ENCODE measurements at regions of chr16 and their contacts with region 1.

Region 1: DNA sequence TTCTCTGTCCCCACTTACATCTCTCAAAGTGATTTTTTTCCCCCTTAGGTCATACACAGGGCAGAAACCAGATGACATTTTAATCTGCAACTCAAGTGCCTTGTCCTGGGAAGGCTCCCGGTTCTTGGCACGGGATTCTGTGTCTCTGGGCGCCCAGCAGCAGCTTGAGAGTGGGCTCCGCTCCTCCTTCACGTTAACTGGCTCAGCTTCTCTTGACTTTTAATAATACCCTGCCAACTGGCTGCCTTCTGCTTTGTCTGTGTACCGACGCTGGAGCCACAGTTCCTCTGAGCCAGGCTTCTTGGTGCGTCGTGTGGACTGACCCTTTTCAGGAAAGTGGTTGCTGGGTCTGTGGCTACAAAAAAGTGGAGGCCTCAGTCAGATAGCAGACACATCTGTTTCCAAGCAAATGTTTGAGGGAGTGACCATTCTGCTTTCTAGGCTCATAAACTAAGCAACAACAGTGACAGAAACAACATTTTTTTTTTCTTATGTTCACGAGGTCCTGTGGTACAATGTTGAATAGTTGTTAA is 64.9 kb downstream of the IRF8 start:
- DNase-seq: no peak
- H3K4me3 ChIP-seq: no peak overlapping the region
- H3K27ac ChIP-seq: no peak overlapping the region
- H3K4me1 ChIP-seq: peaks cover 15% of the 10 kb centered on the region
- H3K27me3 ChIP-seq: no peaks in the 10 kb centered on the region
- CTCF ChIP-seq: no peak
- POLR2A ChIP-seq: no peak

Region 2: GRCh38 chr16:85905110-85906095 is 58.4 kb before region 1 on chr16:
- intact Hi-C with region 1: loop called (anchors 2 kb)
- DNase-seq: no peak
- H3K4me3 ChIP-seq: no peak overlapping the region
- H3K27ac ChIP-seq: no peak overlapping the region
- H3K4me1 ChIP-seq: no peaks in the 10 kb centered on the region
- H3K27me3 ChIP-seq: no peaks in the 10 kb centered on the region
- CTCF ChIP-seq: no peak
- POLR2A ChIP-seq: no peak

Region 3: DNA sequence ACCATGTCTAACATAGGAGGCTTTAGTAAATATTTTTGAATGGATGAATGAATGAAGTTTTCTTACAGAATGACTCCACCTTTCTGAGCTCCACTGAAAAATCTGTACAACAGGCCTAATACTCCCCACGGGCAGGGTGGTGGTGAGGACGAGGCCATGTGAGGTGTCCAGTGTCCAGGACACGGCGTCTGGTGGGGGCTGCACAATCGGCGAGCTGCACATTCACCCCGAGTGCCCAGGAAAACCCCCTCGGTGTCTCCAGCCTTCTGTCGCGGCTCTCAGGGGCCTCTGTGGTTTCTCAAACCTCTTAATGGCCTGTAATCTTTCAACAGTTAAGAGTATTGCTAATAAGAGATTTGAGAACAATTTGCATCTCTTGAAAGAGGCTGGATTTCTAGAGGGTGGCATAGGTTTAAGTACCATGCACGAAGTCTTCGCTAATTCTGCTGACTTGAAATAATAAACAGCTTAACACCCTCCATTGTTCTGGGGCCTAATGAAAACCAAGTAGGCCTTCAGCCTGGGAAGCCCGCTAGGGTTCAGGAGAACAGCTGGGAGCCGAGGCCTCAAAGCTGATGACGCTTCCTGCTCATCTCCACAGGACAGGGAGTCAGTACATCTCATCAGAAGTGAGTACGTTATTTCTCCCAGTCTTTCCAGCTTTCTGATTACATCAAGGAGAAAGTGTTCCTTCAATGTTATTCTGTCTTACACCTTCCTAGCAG is 241.9 kb after region 1 on chr16:
- intact Hi-C with region 1: no loop called
- DNase-seq: no peak
- H3K4me3 ChIP-seq: no peak overlapping the region
- H3K27ac ChIP-seq: no peak overlapping the region
- H3K4me1 ChIP-seq: no peaks in the 10 kb centered on the region
- H3K27me3 ChIP-seq: no peaks in the 10 kb centered on the region
- CTCF ChIP-seq: no peak
- POLR2A ChIP-seq: no peak